ENCODE measurements at regions of chr5 and their contacts with region 1.

Region 1: DNA sequence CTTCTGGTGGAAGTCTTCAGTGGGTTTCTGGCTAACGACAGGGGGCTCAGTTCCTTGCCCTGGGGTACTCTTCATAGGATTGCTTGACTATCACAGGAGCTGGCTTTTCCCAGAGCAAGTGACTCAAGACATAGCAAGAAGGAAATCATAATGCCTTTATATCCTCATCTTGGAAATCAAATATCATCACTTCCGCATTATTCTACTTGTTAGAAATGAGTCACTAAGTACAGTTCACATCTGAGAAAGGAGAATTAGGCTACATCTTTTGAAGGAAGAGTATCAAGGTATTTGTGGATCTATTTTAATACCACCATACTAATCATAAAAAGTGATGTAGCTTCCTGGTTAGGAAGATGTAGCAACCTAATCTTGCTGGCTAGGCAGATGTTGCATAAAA is 148.2 kb upstream of the RAI14 start:
- DNase-seq: no peak
- H3K4me3 Mint-ChIP-seq: no peak overlapping the region
- H3K27ac Mint-ChIP-seq: no peak overlapping the region
- H3K4me1 Mint-ChIP-seq: no peaks in the 10 kb centered on the region
- H3K27me3 Mint-ChIP-seq: no peaks in the 10 kb centered on the region
- CTCF ChIP-seq: no peak

Region 2: DNA sequence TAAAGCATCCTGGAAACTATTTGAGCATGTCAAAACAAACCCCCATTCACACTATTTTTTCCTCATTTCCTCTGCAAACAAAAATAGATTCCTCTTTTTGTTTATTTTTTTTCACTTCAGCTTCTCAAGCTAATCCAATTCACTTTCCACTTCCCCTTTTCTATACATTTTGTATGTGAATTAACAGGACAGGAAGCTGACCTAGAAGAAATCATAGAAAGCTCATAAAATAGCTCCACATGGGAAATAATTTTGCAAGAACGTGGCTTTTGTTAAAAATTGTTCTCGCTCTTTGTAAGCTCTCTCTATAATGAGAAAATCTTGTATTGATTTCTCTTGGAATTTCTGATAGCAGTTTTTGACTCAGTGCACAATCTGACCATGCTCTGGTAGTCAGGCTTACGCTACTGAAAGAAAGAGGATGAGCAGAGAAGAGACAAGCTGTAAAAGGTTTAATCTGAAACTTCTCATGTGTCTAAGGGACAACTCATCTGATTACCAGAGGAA is 831.9 kb before region 1 on chr5:
- CTCF ChIA-PET with region 1: no interaction called
- intact Hi-C with region 1: no loop called
- DNase-seq: no peak
- H3K4me3 Mint-ChIP-seq: no peak overlapping the region
- H3K27ac Mint-ChIP-seq: no peak overlapping the region
- H3K4me1 Mint-ChIP-seq: no peaks in the 10 kb centered on the region
- H3K27me3 Mint-ChIP-seq: no peaks in the 10 kb centered on the region
- CTCF ChIP-seq: no peak

Region 3: DNA sequence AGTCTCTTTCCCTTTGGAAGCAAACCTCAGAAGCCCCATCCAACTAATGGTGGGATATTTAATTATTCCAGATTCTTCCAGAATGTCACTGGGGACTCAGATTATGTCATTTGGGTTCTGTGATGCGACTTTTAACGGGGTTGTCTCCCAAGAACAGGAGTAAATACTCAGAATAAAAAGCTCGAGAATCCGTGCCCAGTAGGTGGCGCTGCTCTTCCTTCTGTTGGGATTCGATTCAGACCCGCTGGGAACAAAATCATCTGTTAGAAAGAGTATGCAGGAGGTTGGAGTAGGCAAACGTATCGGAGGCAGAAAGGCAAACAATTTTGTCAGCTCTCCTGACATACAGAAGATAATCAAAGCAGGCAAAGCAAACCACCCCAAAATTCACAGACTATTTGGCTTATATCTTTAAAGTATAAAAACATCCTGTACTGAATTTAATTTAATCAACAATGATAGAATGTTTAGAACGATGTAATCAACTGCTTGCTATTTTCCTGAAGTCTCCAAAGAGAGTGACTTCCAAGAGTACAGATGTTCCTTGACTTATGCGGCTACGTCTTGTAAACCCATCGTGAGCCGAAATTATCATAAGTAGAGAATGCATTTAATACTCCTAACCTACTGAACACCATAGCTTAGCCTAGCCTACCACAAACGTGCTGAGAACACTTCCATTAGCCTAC is 21.6 kb before region 1 on chr5:
- CTCF ChIA-PET with region 1: interaction called, 6 read pairs
- intact Hi-C with region 1: loop called (anchors 1 kb)
- DNase-seq: peak; percentile 76
- H3K4me3 Mint-ChIP-seq: no peak overlapping the region
- H3K27ac Mint-ChIP-seq: no peak overlapping the region
- H3K4me1 Mint-ChIP-seq: peaks cover 32% of the 10 kb centered on the region
- H3K27me3 Mint-ChIP-seq: no peaks in the 10 kb centered on the region
- CTCF ChIP-seq: peak; percentile 70